ENCODE measurements at regions of chr6 and their contacts with region 1.

Region 1: DNA sequence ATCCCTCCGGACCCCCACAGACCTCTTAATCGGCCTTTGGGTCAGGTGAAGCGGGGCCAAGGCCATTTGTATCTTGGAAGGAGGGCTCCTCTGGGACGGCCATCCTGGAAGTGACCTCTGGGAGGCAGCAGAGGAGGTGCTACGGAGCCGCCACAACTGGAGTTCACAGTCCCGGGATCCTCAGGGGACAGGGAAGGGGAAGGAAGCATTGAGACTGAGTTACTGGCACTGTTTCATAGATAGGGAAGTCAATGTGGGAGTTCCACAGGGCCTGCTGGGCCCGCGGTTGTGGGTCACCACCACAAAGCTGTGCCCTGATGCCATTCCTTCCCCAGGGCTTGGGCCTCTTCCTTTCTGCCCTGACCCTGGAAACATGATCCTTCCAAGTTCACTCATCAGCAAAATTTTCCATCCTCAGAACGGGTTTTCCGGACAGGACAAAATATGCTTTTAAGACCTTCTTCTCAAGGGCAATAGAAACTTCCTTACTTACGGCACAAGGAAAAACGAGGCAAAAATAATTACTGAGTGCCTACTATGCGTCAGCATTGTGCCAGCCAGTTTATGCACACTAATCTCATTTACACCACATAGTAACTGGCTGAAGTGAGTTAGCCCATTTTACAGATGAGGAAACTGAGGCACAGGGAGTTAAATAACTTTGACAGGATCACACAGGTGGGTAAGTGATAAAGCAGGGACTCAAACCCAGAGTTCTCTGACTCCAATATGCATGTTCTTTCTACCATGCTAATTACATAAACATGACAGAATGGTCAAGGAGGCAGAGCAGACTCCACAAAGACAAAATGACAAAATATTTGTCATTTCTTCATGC is 143.8 kb downstream of the UNC5CL start:
- DNase-seq: peak; percentile 77 to 79
- H3K4me3 ChIP-seq: no peak overlapping the region
- H3K4me3 Mint-ChIP-seq: no peak overlapping the region
- H3K27ac Mint-ChIP-seq: no peak overlapping the region
- H3K4me1 ChIP-seq: peaks cover 22% of the 10 kb centered on the region
- H3K4me1 Mint-ChIP-seq: peaks cover 18% of the 10 kb centered on the region
- H3K27me3 ChIP-seq: no peaks in the 10 kb centered on the region
- H3K27me3 Mint-ChIP-seq: no peaks in the 10 kb centered on the region
- CTCF ChIP-seq: peak; percentile 65 to 79

Region 2: GRCh38 chr6:40743226-40743625 is 152.0 kb before region 1 on chr6:
- CTCF ChIA-PET with region 1: no interaction called
- POLR2A ChIA-PET with region 1: no interaction called
- intact Hi-C with region 1: no loop called
- DNase-seq: no peak
- H3K4me3 ChIP-seq: no peak overlapping the region
- H3K4me3 Mint-ChIP-seq: no peak overlapping the region
- H3K27ac Mint-ChIP-seq: no peak overlapping the region
- H3K4me1 ChIP-seq: peaks cover 5% of the 10 kb centered on the region; the same call in 1 of the 2 replicates
- H3K4me1 Mint-ChIP-seq: no peaks in the 10 kb centered on the region
- H3K27me3 ChIP-seq: no peaks in the 10 kb centered on the region
- H3K27me3 Mint-ChIP-seq: peaks cover 8% of the 10 kb centered on the region
- CTCF ChIP-seq: no peak

Region 3: GRCh38 chr6:40999569-40999968 is 104.4 kb after region 1 on chr6:
- CTCF ChIA-PET with region 1: interaction called, 6 read pairs
- POLR2A ChIA-PET with region 1: no interaction called
- intact Hi-C with region 1: loop called (anchors 5 kb)
- DNase-seq: peak; percentile 61 to 73
- H3K4me3 ChIP-seq: no peak overlapping the region
- H3K4me3 Mint-ChIP-seq: no peak overlapping the region
- H3K27ac Mint-ChIP-seq: peak overlapping the region; percentile 99
- H3K4me1 ChIP-seq: peaks cover 44% of the 10 kb centered on the region
- H3K4me1 Mint-ChIP-seq: peaks cover 53% of the 10 kb centered on the region
- H3K27me3 ChIP-seq: no peaks in the 10 kb centered on the region
- H3K27me3 Mint-ChIP-seq: no peaks in the 10 kb centered on the region
- CTCF ChIP-seq: peak in 1 of 2 experiments; percentile 44

Region 4: DNA sequence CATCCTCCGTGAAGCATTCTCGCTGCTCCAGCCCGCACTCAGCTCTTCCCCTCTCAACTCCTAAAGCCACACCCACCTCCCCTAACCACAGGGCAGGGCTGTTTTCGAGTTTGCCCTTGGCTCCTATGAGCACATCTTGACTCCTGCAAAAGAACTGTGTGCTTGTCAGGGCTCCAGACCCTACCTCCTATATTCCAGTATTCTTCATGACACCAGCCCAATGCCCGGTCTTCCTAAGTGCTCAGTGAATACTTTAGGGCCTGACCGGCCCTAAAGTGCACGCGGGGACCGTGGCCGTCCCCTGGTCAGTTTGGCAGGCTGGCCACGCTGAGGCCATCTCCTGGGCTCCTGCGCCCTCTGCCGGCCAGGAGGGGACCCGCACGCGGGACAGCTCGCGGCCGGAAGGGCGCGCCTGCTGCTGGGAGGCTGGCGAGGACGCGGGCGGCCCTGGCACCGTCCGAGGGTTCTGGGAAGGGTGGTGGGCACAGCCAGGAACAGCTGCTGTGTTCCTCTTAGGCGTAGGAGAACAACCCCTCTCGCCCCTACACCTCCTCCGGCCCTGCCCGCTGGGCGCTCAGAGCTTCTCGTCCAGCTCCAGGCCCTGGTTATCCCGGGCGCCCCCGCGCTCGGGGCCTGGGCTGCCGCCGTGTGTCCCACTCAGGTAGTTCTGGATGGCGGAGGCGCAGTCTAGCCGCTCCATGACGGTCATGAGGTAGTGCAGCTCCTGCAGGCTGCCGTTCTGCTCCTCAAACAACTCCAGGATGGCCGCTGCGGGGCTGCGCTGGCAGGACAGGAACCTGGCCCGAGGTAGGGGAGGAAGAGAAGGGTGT is 132.8 kb after region 1 on chr6:
- CTCF ChIA-PET with region 1: no interaction called
- POLR2A ChIA-PET with region 1: no interaction called
- intact Hi-C with region 1: no loop called
- DNase-seq: peak in 1 of 2 experiments; percentile 44
- H3K4me3 ChIP-seq: no peak overlapping the region
- H3K4me3 Mint-ChIP-seq: peak overlapping the region; percentile 63
- H3K27ac Mint-ChIP-seq: no peak overlapping the region
- H3K4me1 ChIP-seq: 0 out of 2 replicates have a peak, but pooled peaks cover 4% of the 10 kb centered on the region
- H3K4me1 Mint-ChIP-seq: peaks cover 6% of the 10 kb centered on the region
- H3K27me3 ChIP-seq: no peaks in the 10 kb centered on the region
- H3K27me3 Mint-ChIP-seq: no peaks in the 10 kb centered on the region
- CTCF ChIP-seq: peak; percentile 29 to 46

Region 5: DNA sequence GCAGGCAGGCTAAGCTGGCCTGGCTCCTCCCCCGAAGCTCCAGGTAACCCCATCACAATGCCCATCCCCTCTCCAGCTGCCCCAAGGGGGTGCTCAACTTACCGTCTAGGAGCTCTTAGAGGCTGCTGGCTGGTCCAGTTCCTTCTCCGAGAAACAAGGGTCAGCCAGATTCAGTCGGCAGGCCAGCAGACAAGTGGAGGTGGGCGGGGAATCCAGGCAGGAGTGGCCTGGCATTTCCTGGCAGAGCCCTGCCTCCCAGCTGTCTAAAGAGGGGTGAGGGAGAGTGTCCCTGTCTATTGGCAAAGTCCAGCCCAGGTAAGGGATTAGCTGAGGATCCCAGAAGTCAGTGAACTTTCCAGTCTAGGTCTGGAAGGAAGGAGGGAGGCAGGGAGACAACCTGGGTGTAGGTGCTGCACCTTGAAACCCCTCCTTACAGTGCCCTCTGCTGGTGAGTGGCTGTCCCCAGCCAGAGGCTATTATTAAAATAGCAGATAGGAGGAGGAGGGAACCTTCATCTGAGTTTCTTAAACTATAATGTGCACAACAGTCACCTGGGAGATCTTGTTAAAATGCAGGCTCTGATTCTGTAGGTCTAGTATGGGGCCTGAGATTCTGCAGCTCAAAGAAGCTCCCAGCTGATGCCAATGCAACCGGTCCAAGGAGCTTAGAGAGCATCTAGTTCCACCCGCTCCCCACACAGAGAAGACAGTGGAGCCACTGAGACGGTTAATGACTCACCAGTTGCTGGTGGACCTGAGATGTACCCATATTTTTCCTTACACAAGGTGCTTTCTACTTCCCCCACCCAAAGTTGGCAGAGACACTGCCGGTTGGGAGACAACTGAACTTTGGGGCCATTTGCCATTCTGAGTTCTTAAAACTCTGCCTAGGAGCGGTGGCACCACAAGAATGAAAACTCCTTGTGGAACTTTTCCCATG is 144.1 kb after region 1 on chr6 and contains the start of gene UNC5CL:
- CTCF ChIA-PET with region 1: interaction called, 4 read pairs
- POLR2A ChIA-PET with region 1: no interaction called
- intact Hi-C with region 1: loop called (anchors 1 kb)
- DNase-seq: peak; percentile 83 to 84
- H3K4me3 ChIP-seq: no peak within 1 kb of the TSS
- H3K4me3 Mint-ChIP-seq: peak within 1 kb of the TSS; percentile 63
- H3K27ac Mint-ChIP-seq: peak within 1 kb of the TSS; percentile 96
- H3K4me1 ChIP-seq: peaks cover 59% of the 10 kb centered on the region
- H3K4me1 Mint-ChIP-seq: peaks cover 41% of the 10 kb centered on the region
- H3K27me3 ChIP-seq: no peaks in the 10 kb centered on the region
- H3K27me3 Mint-ChIP-seq: no peaks in the 10 kb centered on the region
- CTCF ChIP-seq: peak; percentile 57 to 65
- total RNA-seq, gene UNC5CL: 4.5 and 5.5 TPM in 2 replicates

Region 6: GRCh38 chr6:41072676-41073623 is 177.8 kb after region 1 on chr6 and contains the start of gene NFYA:
- CTCF ChIA-PET with region 1: interaction called, 3 read pairs
- POLR2A ChIA-PET with region 1: no interaction called
- intact Hi-C with region 1: loop called (anchors 1 kb)
- DNase-seq: peak; percentile 99
- H3K4me3 ChIP-seq: peak within 1 kb of the TSS; percentile 98
- H3K4me3 Mint-ChIP-seq: peak within 1 kb of the TSS; percentile 92
- H3K27ac Mint-ChIP-seq: peak within 1 kb of the TSS; percentile 95
- H3K4me1 ChIP-seq: peaks cover 16% of the 10 kb centered on the region; the same call in 1 of the 2 replicates
- H3K4me1 Mint-ChIP-seq: peaks cover 29% of the 10 kb centered on the region
- H3K27me3 ChIP-seq: no peaks in the 10 kb centered on the region
- H3K27me3 Mint-ChIP-seq: no peaks in the 10 kb centered on the region
- CTCF ChIP-seq: peak; percentile 16 to 43
- total RNA-seq, gene NFYA: 25.7 and 27.7 TPM in 2 replicates